ENCODE measurements at regions of chr11 and their contacts with region 1.

Region 1: DNA sequence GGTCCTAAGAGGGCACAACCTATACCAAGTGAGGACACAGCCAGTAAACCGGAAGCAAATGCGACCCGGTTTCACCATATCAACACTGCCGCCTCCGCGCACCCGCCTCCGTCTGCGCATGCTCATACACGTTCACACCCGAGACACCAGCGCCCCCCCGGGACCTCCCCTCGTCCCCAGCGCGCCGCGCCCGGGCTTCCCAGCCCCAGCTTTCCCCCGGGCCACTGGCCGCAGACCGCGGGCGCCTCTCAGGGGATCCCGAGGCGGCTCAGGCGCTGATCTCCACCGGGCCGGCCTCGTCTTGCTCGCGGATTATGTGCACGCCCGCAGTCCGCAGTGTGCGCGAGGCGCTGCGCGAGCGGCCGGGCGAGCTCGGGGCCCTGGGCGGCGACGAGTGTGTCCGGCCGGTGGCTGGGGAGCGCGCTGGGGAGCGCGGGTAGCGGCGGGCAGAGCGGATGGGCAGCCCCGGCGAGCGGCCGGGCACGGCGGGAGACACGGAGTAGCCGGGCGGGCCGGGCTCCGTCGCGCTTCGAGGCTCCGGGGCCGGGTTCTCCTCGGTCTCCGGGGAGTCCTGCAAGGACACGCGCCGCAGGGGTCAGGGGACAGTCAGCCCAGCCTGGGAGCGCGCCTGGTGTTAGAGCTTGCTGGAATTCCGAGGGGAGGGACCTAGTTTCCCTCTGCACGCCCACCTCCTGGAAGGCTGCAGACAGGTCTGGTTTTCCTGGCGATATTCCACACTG is 2.0 kb downstream of the HEPN1 start:
- DNase-seq: peak; percentile 86
- ATAC-seq: peak; percentile 82 to 93 (median 84)
- H3K4me3 ChIP-seq: peak overlapping the region; percentile 3 to 59 (median 52)
- H3K27ac ChIP-seq: peak overlapping the region; percentile 58 to 90 (median 82)
- H3K4me1 ChIP-seq: peaks cover 0 to 18% (median 12%) of the 10 kb centered on the region in 9 donors
- H3K27me3 ChIP-seq: peaks cover 0 to 12% (median 0%) of the 10 kb centered on the region in 7 donors
- CTCF ChIP-seq: peak in 4 of 9 donors; percentile 14 to 43 (median 28)

Region 2: GRCh38 chr11:124875943-124876817 is 44.9 kb before region 1 on chr11:
- intact Hi-C with region 1: loop called in 4 of 10 experiments (anchors 2 to 10 kb)
- DNase-seq: peak; percentile 87 to 89
- ATAC-seq: peak; percentile 89 to 93 (median 90)
- H3K4me3 ChIP-seq: peak overlapping the region; percentile 36 to 72 (median 66)
- H3K27ac ChIP-seq: peak overlapping the region; percentile 10 to 96 (median 90)
- H3K4me1 ChIP-seq: peaks cover 3 to 44% (median 23%) of the 10 kb centered on the region in 9 donors
- H3K27me3 ChIP-seq: peaks cover 0 to 66% (median 40%) of the 10 kb centered on the region in 7 donors
- CTCF ChIP-seq: peak; percentile 53 to 94 (median 73)

Region 3: DNA sequence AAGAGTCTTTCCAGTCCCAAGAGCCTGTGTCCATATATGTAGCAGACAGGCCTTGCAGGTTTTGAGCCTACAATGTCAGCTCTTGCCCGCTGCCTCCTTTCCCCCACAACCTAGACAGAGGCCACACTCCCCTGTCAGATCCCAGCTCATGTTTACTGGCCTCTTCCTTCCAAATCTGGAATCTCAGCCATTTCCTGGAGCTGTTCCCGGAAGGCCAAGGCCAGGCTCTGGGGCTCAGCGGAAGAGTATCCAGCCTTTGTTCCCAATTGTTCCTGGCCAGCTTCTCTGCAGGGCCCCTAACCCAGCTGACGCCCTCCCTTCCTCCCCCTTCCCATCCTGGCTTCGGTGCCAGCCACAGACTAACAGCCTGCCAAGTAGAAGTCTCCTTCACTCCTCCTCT is 22.3 kb before region 1 on chr11:
- intact Hi-C with region 1: loop called in 1 of 10 experiments (anchors 2 kb)
- DNase-seq: peak; percentile 59 to 73
- ATAC-seq: peak; percentile 55 to 80 (median 64)
- H3K4me3 ChIP-seq: peak overlapping the region in 4 of 10 donors; percentile 55 to 65 (median 60)
- H3K27ac ChIP-seq: peak overlapping the region; percentile 82 to 95 (median 88)
- H3K4me1 ChIP-seq: peaks cover 11 to 72% (median 53%) of the 10 kb centered on the region in 9 donors
- H3K27me3 ChIP-seq: peaks cover 0 to 19% (median 0%) of the 10 kb centered on the region in 7 donors
- CTCF ChIP-seq: no peak